K562 (cell line): ENCODE measurements at regions of chr2 and their contacts with region 1.

Region 1: GRCh38 chr2:109736177-109736827 is 57.8 kb upstream of the RGPD5 start:
- DNase-seq: peak in 2 of 4 experiments; percentile 16 to 43
- ATAC-seq: peak; percentile 69
- H3K4me3 ChIP-seq: no peak overlapping the region
- H3K27ac ChIP-seq: no peak overlapping the region
- H3K4me1 ChIP-seq: no peaks in the 10 kb centered on the region
- H3K27me3 ChIP-seq: no peaks in the 10 kb centered on the region
- CTCF ChIP-seq: peak; percentile 37 to 58 (median 51); a peak in 4 of 6 replicates
- EP300 ChIP-seq: no peak
- POLR2A ChIP-seq: no peak
- RAD21 ChIP-seq: peak; percentile 55 to 64

Region 2: DNA sequence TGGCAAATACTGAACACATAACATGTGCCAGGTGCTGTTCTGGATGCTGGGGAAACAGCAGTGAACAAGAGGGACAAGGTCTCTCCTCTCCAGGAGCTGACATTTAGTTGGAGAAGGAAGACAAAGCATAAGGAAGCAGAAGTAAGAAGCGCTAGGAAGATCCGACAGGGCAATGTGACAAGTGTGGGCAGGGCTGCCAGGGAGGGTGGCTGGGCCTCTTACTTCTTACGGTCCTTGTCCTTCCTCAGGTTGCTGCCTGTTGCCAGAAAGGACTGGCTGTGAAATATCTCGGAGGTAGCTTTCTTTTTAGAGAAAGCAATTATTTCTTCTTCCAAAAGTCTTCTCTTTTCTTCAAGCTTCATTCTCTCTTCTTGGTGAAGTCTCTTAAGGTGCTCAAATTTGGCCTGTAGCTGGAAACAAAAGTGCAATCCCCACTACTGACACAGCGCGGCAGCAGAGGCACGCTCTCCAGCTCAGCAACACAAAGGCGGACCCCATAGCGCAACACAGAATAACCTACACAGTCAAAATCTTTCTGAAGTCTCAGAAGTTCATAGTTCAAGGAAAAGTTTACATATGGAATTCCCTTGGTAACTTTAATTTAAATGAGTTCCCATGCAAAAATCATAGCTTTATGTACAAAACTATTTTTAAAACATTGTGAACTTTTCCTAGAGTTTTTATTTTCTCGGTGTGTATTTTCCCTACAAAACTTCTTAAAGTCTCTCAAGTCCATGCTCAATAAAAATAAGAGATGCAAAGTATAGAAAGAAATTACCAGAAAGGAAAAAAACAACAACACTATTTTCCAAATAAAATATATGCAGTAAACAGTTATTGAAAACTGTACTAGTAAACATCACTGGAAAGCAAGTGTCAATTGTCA is 190.2 kb before region 1 on chr2:
- CTCF ChIA-PET with region 1: interaction called, 8 read pairs
- POLR2A ChIA-PET with region 1: no interaction called
- in situ Hi-C with region 1: loop called (anchors 10 kb)
- intact Hi-C with region 1: loop called (anchors 1 kb)
- DNase-seq: peak; percentile 40 to 69 (median 52)
- ATAC-seq: peak; percentile 90
- H3K4me3 ChIP-seq: no peak overlapping the region
- H3K27ac ChIP-seq: no peak overlapping the region
- H3K4me1 ChIP-seq: no peaks in the 10 kb centered on the region
- H3K27me3 ChIP-seq: peaks cover 0 to 12% of the 10 kb centered on the region in 2 experiments; a peak in 2 of 5 replicates
- CTCF ChIP-seq: peak; percentile 83 to 85 (median 84)
- EP300 ChIP-seq: no peak
- POLR2A ChIP-seq: no peak
- RAD21 ChIP-seq: peak; percentile 92 to 93

Region 3: GRCh38 chr2:109680523-109681297 is 55.6 kb before region 1 on chr2:
- CTCF ChIA-PET with region 1: no interaction called
- POLR2A ChIA-PET with region 1: no interaction called
- in situ Hi-C with region 1: no loop called
- intact Hi-C with region 1: no loop called
- DNase-seq: no peak
- ATAC-seq: no peak
- H3K4me3 ChIP-seq: no peak overlapping the region
- H3K27ac ChIP-seq: no peak overlapping the region
- H3K4me1 ChIP-seq: no peaks in the 10 kb centered on the region
- H3K27me3 ChIP-seq: peaks cover 5 to 29% of the 10 kb centered on the region in 2 experiments; a peak in 3 of 5 replicates
- CTCF ChIP-seq: no peak
- EP300 ChIP-seq: no peak
- POLR2A ChIP-seq: no peak
- RAD21 ChIP-seq: no peak